Gastrocnemius medialis (tissue), 4 donors: ENCODE measurements at regions of chr20 and their contacts with region 1.

Region 1: DNA sequence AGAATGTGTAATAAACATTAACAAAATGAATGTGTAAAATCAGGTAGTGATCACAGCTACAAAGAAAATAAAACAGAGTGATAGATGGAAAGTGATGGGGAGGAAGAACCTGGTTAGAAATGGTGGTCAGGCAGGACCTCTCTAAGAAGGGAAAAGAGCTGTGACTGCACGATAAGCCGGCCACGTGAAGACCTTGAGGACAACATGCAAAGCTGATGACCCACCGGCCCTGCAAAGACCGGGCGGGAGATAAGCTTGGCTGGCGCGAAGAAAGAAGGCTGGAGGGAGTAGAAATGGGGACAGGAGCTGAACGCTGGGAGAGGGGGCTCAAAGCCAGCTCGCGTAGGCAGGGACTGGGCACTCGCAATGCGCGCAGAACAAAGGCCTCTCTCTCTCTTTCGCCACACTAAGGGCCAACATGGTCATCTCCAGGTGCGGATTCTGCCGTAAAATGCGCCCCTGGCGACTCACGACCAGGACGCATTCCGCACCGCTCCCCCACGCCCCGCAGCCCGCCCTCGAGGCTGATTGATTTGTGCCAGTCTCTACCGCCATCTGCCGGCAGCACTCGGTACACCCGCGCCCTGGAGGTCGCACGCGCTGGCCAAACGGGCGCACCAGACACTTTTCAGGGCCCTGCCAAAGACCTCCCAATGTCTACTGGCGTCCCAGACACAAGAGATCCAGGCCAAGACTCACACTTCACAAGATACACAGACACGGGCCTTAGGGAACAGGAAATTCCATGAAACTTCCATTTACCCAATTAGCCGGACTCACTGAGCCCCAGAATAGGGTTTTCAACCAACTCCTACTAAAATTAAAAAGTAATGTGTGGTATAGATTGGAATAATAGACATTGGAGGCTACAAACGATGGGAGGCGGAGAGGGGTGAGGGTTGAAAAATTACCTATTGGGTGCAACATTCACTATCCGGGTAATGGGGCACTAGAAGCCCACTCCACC is 9.4 kb downstream of the DEFB132 start:
- DNase-seq: peak; percentile 44 to 57
- ATAC-seq: peak; percentile 87 to 91
- H3K4me3 ChIP-seq: peak overlapping the region; percentile 47 to 61 (median 54)
- H3K27ac ChIP-seq: no peak overlapping the region
- H3K4me1 ChIP-seq: no peaks in the 10 kb centered on the region
- H3K27me3 ChIP-seq: no peaks in the 10 kb centered on the region
- CTCF ChIP-seq: peak; percentile 88 to 98 (median 92)
- POLR2A ChIP-seq: no peak

Region 2: GRCh38 chr20:330233-331149 is 63.6 kb after region 1 on chr20:
- in situ Hi-C with region 1: no loop called
- intact Hi-C with region 1: loop called (anchors 2 kb)
- DNase-seq: no peak
- ATAC-seq: peak; percentile 34 to 70
- H3K4me3 ChIP-seq: no peak overlapping the region
- H3K27ac ChIP-seq: no peak overlapping the region
- H3K4me1 ChIP-seq: peaks cover 5% of the 10 kb centered on the region in 2 donors
- H3K27me3 ChIP-seq: peaks cover 0 to 7% (median 2%) of the 10 kb centered on the region in 3 donors
- CTCF ChIP-seq: peak; percentile 65 to 91 (median 82)
- POLR2A ChIP-seq: no peak

Region 3: GRCh38 chr20:1330075-1330830 is 1063.4 kb after region 1 on chr20:
- in situ Hi-C with region 1: no loop called
- intact Hi-C with region 1: no loop called
- DNase-seq: peak; percentile 85 to 93
- ATAC-seq: peak; percentile 69 to 82
- H3K4me3 ChIP-seq: no peak overlapping the region
- H3K27ac ChIP-seq: peak overlapping the region; percentile 93 to 99 (median 97)
- H3K4me1 ChIP-seq: peaks cover 53 to 65% of the 10 kb centered on the region in 2 donors
- H3K27me3 ChIP-seq: no peaks in the 10 kb centered on the region
- CTCF ChIP-seq: no peak
- POLR2A ChIP-seq: peak; percentile 78 to 87